CD4-positive, alpha-beta memory T cell (primary cell): ENCODE measurements at regions of chr13 and their contacts with region 1.

Region 1: DNA sequence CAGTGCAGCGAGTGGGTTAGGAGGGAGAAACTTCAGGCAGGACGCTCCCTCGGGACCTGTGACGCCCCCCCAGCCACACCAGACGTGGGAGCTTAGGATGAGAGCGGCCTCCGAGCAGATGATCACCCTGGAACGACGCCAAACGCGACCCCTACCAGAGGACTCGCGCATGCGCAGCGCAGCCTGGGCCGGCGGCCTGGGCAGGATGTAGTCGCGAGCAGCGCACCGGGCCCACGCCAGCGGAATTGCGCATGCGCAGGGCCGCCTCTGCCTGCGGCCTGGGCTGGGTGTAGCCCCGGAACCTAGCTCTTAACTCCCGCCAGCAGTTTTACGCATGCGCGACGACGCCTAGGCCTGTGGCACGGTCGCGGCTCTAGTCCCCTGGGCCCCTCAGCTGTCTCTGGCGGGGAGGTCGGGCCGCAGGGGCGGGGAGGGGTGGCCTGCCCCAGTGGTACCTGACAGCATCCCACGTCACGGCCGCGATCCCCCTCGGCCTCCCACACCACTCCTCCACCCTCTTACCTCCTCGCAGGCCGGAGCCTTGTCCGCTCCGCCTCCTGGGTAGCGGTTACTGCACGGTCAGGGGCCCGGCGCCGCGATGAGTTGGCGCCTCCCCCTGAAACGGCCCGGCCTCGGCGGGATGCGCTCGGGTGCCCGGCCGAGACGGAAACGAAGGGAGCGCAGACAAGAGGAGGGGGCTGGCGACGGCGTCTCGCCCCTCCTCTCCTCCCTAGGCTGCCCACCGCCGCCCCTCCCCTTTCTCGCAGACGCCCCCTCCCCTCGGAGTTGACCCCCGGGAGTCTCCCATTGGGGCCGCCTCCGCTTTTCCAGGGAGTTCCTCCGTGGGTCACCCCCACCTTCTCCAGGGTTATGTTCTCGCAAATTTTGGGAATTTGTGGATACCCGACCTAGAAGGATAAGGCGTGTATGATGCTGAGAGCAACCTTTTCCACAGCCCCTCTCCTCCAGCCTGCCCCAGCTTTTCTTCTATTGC is at the start of gene RCBTB2:
- DNase-seq: peak; percentile 97 to 99 (median 98)
- H3K4me3 ChIP-seq: peak within 1 kb of the TSS; percentile 70 to 75
- H3K4me3 Mint-ChIP-seq: peak within 1 kb of the TSS; percentile 92 to 98 (median 94)
- H3K27ac ChIP-seq: peak within 1 kb of the TSS; percentile 92
- H3K27ac Mint-ChIP-seq: peak within 1 kb of the TSS; percentile 97 to 99 (median 99)
- H3K4me1 ChIP-seq: peaks cover 46% of the 10 kb centered on the region
- H3K4me1 Mint-ChIP-seq: peaks cover 20 to 55% (median 36%) of the 10 kb centered on the region in 4 donors
- H3K27me3 ChIP-seq: no peaks in the 10 kb centered on the region
- H3K27me3 Mint-ChIP-seq: no peaks in the 10 kb centered on the region
- total RNA-seq, gene RCBTB2: 23.9 to 25.7 TPM

Region 2: DNA sequence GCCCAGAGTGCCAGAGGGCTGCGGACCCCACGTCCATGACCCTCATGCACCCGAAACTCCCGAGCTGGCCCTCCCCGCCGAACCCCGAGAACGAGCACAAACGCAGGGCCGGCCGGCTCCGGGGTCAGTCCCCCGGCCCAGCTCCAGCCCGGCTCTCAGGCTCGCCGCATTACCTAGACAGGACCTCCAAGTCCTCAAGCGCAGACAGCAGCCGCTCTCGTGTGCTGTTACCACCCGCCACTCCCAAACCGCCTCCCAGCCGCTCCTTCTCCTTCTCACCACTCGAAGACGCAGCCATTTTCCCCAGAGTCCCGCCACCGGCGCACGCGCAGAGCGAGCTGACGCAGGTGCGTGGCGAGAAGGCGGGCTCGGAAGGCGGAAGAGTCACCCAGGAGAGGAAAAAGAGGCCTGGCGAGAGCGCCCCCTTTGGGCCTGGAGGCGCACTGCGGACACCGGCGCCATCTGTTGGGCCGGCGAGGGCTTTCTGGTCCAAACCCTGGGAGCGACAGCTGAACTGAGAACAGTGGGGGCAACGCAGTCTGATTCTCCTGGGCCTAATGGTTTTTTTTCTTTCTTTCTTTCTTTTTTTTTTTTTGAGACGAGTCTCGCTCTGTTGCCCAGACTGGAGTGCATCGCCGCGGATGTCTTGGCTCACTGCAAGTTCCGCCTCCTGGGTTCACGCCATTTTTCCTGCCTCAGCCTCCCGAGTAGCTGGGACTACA is 437.9 kb before region 1 on chr13 and contains the start of gene MED4:
- CTCF ChIA-PET with region 1: no interaction called
- POLR2A ChIA-PET with region 1: interaction called, 3 read pairs
- intact Hi-C with region 1: loop called (anchors 1 kb)
- DNase-seq: peak; percentile 95 to 98 (median 97)
- H3K4me3 ChIP-seq: peak within 1 kb of the TSS; percentile 73 to 76
- H3K4me3 Mint-ChIP-seq: peak within 1 kb of the TSS; percentile 93 to 98 (median 96)
- H3K27ac ChIP-seq: peak within 1 kb of the TSS; percentile 96
- H3K27ac Mint-ChIP-seq: peak within 1 kb of the TSS; percentile 92 to 99 (median 98)
- H3K4me1 ChIP-seq: peaks cover 37% of the 10 kb centered on the region
- H3K4me1 Mint-ChIP-seq: peaks cover 24 to 54% (median 35%) of the 10 kb centered on the region in 4 donors
- H3K27me3 ChIP-seq: no peaks in the 10 kb centered on the region
- H3K27me3 Mint-ChIP-seq: peaks cover 0 to 2% of the 10 kb centered on the region in 2 donors
- total RNA-seq, gene MED4: 50.6 to 53.5 TPM

Region 3: DNA sequence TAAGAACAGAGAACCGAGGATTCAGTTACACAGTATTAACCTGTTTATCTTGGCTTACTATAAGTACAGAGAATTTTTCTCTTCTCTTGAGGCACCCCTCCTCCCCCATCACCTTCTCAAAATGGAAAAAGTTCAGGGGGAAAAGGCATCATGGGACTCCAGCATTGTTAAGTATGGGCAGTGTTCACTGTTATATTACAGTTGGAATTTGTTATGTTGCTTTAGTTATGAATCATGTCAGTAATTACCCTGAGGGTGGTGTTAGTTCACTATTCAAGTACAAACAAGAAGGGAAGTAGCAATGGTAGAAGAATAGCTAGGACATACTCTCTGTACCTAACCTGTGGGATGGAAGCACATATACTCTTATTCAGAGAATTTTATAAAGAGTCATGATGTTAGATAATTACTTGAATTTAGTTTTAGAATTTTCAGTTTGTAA is 131.9 kb before region 1 on chr13:
- CTCF ChIA-PET with region 1: interaction called, 3 read pairs
- POLR2A ChIA-PET with region 1: interaction called, 34 read pairs
- intact Hi-C with region 1: loop called (anchors 2 kb)
- DNase-seq: peak in 2 of 5 donors; percentile 19 to 33
- H3K4me3 ChIP-seq: peak overlapping the region in 1 of 2 donors; percentile 21
- H3K4me3 Mint-ChIP-seq: peak overlapping the region; percentile 1 to 81 (median 67)
- H3K27ac ChIP-seq: peak overlapping the region; percentile 0
- H3K27ac Mint-ChIP-seq: peak overlapping the region; percentile 53 to 94 (median 77)
- H3K4me1 ChIP-seq: peaks cover 79% of the 10 kb centered on the region
- H3K4me1 Mint-ChIP-seq: peaks cover 47 to 89% (median 67%) of the 10 kb centered on the region in 4 donors
- H3K27me3 ChIP-seq: no peaks in the 10 kb centered on the region
- H3K27me3 Mint-ChIP-seq: no peaks in the 10 kb centered on the region

Region 4: GRCh38 chr13:48492470-48493065 is 40.2 kb before region 1 on chr13:
- CTCF ChIA-PET with region 1: interaction called, 8 read pairs
- POLR2A ChIA-PET with region 1: interaction called, 61 read pairs
- intact Hi-C with region 1: loop called (anchors 1 kb)
- DNase-seq: peak; percentile 77 to 85 (median 81)
- H3K4me3 ChIP-seq: peak overlapping the region; percentile 63 to 70
- H3K4me3 Mint-ChIP-seq: no peak overlapping the region
- H3K27ac ChIP-seq: peak overlapping the region; percentile 74
- H3K27ac Mint-ChIP-seq: no peak overlapping the region
- H3K4me1 ChIP-seq: peaks cover 100% of the 10 kb centered on the region
- H3K4me1 Mint-ChIP-seq: peaks cover 32 to 51% (median 46%) of the 10 kb centered on the region in 4 donors
- H3K27me3 ChIP-seq: no peaks in the 10 kb centered on the region
- H3K27me3 Mint-ChIP-seq: no peaks in the 10 kb centered on the region

Region 5: DNA sequence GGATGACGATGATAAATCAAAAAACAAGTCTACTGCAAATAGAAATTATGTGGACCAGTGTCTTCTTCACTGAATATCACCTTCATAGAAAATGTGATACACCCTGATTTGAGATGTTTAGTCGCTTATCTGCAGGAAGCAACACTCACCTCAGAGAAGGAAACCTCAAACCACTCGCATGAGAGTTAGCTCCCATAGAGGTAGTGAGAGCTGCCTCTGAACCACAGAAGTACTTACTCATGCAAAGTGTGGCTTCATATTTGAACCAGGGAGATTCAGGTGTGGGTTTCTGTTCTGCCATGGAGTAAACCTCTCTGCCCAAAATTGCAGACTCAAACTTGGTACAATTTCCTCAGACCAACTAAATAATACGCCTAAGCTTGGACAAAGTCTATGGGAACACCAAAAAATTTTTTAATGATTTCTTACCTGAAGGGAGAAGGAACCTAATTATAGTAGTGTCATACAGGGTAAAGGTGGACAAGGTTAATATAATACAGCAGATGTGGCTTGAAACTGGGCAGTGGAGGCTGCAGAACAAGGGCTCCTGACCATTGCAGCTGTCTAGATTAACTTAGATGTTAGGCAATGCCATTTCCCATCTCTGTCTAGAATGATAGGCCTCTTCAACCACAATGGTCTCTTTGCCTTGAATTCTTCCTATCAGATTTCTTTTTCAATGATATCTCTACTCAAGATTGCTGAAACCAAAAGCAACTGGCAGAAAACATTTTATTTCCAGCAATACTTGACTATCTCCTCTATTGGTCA is 29.7 kb after region 1 on chr13:
- CTCF ChIA-PET with region 1: interaction called, 14 read pairs
- POLR2A ChIA-PET with region 1: interaction called, 126 read pairs
- intact Hi-C with region 1: loop called (anchors 1 kb)
- DNase-seq: peak; percentile 83 to 92 (median 87)
- H3K4me3 ChIP-seq: peak overlapping the region in 1 of 2 donors; percentile 39
- H3K4me3 Mint-ChIP-seq: peak overlapping the region in 7 of 8 donors; percentile 42 to 79 (median 76)
- H3K27ac ChIP-seq: no peak overlapping the region
- H3K27ac Mint-ChIP-seq: peak overlapping the region in 6 of 7 donors; percentile 44 to 89 (median 62)
- H3K4me1 ChIP-seq: peaks cover 56% of the 10 kb centered on the region
- H3K4me1 Mint-ChIP-seq: peaks cover 45 to 68% (median 58%) of the 10 kb centered on the region in 4 donors
- H3K27me3 ChIP-seq: no peaks in the 10 kb centered on the region
- H3K27me3 Mint-ChIP-seq: no peaks in the 10 kb centered on the region

Region 6: GRCh38 chr13:48975856-48976575 is 443.2 kb after region 1 on chr13 and contains the start of gene FNDC3A:
- CTCF ChIA-PET with region 1: no interaction called
- POLR2A ChIA-PET with region 1: no interaction called
- intact Hi-C with region 1: loop called (anchors 10 kb)
- DNase-seq: peak; percentile 88 to 92 (median 89)
- H3K4me3 ChIP-seq: peak within 1 kb of the TSS; percentile 81 to 83
- H3K4me3 Mint-ChIP-seq: peak within 1 kb of the TSS; percentile 94 to 98 (median 96)
- H3K27ac ChIP-seq: peak within 1 kb of the TSS; percentile 90
- H3K27ac Mint-ChIP-seq: peak within 1 kb of the TSS; percentile 90 to 99 (median 99)
- H3K4me1 ChIP-seq: peaks cover 51% of the 10 kb centered on the region
- H3K4me1 Mint-ChIP-seq: peaks cover 28 to 55% (median 40%) of the 10 kb centered on the region in 4 donors
- H3K27me3 ChIP-seq: no peaks in the 10 kb centered on the region
- H3K27me3 Mint-ChIP-seq: peaks cover 0 to 3% of the 10 kb centered on the region in 2 donors
- total RNA-seq, gene FNDC3A: 43.7 to 44.4 TPM